Endothelial cell of umbilical vein (primary cell): ENCODE measurements at regions of chr1 and their contacts with region 1.

Region 1: GRCh38 chr1:167220537-167221125 is at the start of gene POU2F1:
- DNase-seq: peak; percentile 99
- H3K4me3 ChIP-seq: peak within 1 kb of the TSS; percentile 86 to 95 (median 88)
- H3K27ac ChIP-seq: peak within 1 kb of the TSS; percentile 62
- H3K4me1 ChIP-seq: peaks cover 8% of the 10 kb centered on the region
- H3K27me3 ChIP-seq: no peaks in the 10 kb centered on the region
- CTCF ChIP-seq: peak; percentile 59 to 88
- POLR2A ChIP-seq: peak; percentile 83
- total RNA-seq, gene POU2F1: 12.9 and 15.0 TPM in 2 replicates

Region 2: GRCh38 chr1:165726169-165726568 is 1494.5 kb before region 1 on chr1:
- CTCF ChIA-PET with region 1: no interaction called
- POLR2A ChIA-PET with region 1: no interaction called
- dilution Hi-C with region 1: no loop called
- intact Hi-C with region 1: no loop called
- DNase-seq: no peak
- H3K4me3 ChIP-seq: no peak overlapping the region
- H3K27ac ChIP-seq: no peak overlapping the region
- H3K4me1 ChIP-seq: no peaks in the 10 kb centered on the region
- H3K27me3 ChIP-seq: no peaks in the 10 kb centered on the region
- CTCF ChIP-seq: no peak
- POLR2A ChIP-seq: no peak

Region 3: GRCh38 chr1:166838766-166839599 is 381.6 kb before region 1 on chr1 and contains the start of gene POGK:
- CTCF ChIA-PET with region 1: interaction called, 3 read pairs
- POLR2A ChIA-PET with region 1: no interaction called
- dilution Hi-C with region 1: no loop called
- intact Hi-C with region 1: loop called (anchors 5 kb)
- DNase-seq: peak; percentile 90
- H3K4me3 ChIP-seq: peak within 1 kb of the TSS; percentile 35 to 63 (median 54)
- H3K27ac ChIP-seq: peak within 1 kb of the TSS; percentile 14
- H3K4me1 ChIP-seq: peaks cover 18% of the 10 kb centered on the region
- H3K27me3 ChIP-seq: no peaks in the 10 kb centered on the region
- CTCF ChIP-seq: no peak
- POLR2A ChIP-seq: peak; percentile 81
- total RNA-seq, gene POGK: 31.8 and 32.2 TPM in 2 replicates

Region 4: DNA sequence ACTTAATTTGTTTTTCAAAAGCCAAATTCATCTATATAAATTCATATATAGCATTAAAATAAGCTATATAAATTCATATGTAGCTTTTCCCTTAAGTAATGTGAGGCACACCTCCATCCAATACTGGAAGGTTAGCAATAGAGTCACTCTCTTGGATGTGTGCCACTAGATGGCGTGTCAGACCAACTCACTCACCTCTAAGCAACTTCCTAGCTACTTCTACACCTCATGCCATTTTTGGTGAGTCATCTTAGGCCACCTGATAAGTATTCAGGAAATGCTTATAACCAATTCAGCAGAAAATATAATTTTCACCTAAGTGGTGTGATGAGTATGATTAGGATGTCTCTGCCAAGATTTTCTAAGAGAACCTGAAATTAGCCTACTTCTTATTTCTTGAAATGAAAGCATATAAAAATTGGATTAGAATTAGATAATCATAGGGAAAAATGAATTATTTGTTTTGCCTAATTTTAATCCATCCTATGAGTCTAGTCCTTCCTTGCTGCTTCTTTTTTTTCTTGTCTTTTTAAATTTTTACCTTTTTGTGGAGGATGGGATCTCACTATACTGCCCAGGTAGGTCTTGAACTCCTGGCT is 310.1 kb before region 1 on chr1:
- CTCF ChIA-PET with region 1: interaction called, 11 read pairs
- POLR2A ChIA-PET with region 1: no interaction called
- dilution Hi-C with region 1: no loop called
- intact Hi-C with region 1: no loop called
- DNase-seq: peak; percentile 81
- H3K4me3 ChIP-seq: no peak overlapping the region
- H3K27ac ChIP-seq: no peak overlapping the region
- H3K4me1 ChIP-seq: no peaks in the 10 kb centered on the region
- H3K27me3 ChIP-seq: peaks cover 2 to 10% of the 10 kb centered on the region in 2 experiments
- CTCF ChIP-seq: peak; percentile 58 to 66
- POLR2A ChIP-seq: no peak

Region 5: DNA sequence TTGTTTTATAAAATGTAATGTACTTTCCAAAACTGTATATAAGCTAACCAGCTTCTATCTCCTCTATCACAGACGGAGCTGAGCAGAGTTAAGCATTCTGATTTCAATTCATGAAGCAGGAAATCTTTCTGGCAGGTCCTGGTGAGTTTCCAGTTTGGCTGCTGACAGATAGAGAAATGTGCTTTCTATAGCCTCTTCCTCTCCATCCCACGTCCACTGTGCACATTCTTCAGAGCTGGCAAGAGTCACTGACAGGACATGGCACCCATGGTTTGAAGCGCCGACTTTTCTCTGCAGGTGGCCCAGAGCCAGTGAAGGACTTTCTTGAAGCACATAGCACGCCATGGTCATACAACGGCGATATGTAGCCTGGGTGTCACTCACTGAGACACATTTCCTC is 52.2 kb before region 1 on chr1:
- CTCF ChIA-PET with region 1: no interaction called
- POLR2A ChIA-PET with region 1: no interaction called
- dilution Hi-C with region 1: no loop called
- intact Hi-C with region 1: no loop called
- DNase-seq: no peak
- H3K4me3 ChIP-seq: no peak overlapping the region
- H3K27ac ChIP-seq: no peak overlapping the region
- H3K4me1 ChIP-seq: no peaks in the 10 kb centered on the region
- H3K27me3 ChIP-seq: peaks cover 1 to 13% of the 10 kb centered on the region in 2 experiments
- CTCF ChIP-seq: no peak
- POLR2A ChIP-seq: no peak

Region 6: GRCh38 chr1:167232801-167233200 is 12.2 kb after region 1 on chr1:
- CTCF ChIA-PET with region 1: interaction called, 28 read pairs
- POLR2A ChIA-PET with region 1: interaction called, 3 read pairs
- dilution Hi-C with region 1: no loop called
- intact Hi-C with region 1: no loop called
- DNase-seq: no peak
- H3K4me3 ChIP-seq: no peak overlapping the region
- H3K27ac ChIP-seq: no peak overlapping the region
- H3K4me1 ChIP-seq: peaks cover 7% of the 10 kb centered on the region
- H3K27me3 ChIP-seq: no peaks in the 10 kb centered on the region
- CTCF ChIP-seq: no peak
- POLR2A ChIP-seq: no peak

Region 7: GRCh38 chr1:167533851-167534300 is 313.2 kb after region 1 on chr1:
- CTCF ChIA-PET with region 1: interaction called, 14 read pairs
- POLR2A ChIA-PET with region 1: no interaction called
- dilution Hi-C with region 1: no loop called
- intact Hi-C with region 1: no loop called
- DNase-seq: peak; percentile 47
- H3K4me3 ChIP-seq: no peak overlapping the region
- H3K27ac ChIP-seq: no peak overlapping the region
- H3K4me1 ChIP-seq: no peaks in the 10 kb centered on the region
- H3K27me3 ChIP-seq: peaks cover 0 to 2% of the 10 kb centered on the region in 2 experiments
- CTCF ChIP-seq: peak; percentile 84 to 87
- POLR2A ChIP-seq: no peak

Region 8: GRCh38 chr1:167715157-167715999 is 494.7 kb after region 1 on chr1:
- CTCF ChIA-PET with region 1: interaction called, 4 read pairs
- POLR2A ChIA-PET with region 1: no interaction called
- dilution Hi-C with region 1: no loop called
- intact Hi-C with region 1: loop called (anchors 1 kb)
- DNase-seq: peak; percentile 93
- H3K4me3 ChIP-seq: peak overlapping the region; percentile 89 to 99 (median 96)
- H3K27ac ChIP-seq: peak overlapping the region; percentile 61
- H3K4me1 ChIP-seq: peaks cover 10% of the 10 kb centered on the region
- H3K27me3 ChIP-seq: peaks cover 3 to 4% of the 10 kb centered on the region in 2 experiments
- CTCF ChIP-seq: peak; percentile 80 to 86
- POLR2A ChIP-seq: no peak